Left ventricle myocardium superior (tissue), 1 donor: ENCODE measurements at regions of chr20 and their contacts with region 1.

Region 1: DNA sequence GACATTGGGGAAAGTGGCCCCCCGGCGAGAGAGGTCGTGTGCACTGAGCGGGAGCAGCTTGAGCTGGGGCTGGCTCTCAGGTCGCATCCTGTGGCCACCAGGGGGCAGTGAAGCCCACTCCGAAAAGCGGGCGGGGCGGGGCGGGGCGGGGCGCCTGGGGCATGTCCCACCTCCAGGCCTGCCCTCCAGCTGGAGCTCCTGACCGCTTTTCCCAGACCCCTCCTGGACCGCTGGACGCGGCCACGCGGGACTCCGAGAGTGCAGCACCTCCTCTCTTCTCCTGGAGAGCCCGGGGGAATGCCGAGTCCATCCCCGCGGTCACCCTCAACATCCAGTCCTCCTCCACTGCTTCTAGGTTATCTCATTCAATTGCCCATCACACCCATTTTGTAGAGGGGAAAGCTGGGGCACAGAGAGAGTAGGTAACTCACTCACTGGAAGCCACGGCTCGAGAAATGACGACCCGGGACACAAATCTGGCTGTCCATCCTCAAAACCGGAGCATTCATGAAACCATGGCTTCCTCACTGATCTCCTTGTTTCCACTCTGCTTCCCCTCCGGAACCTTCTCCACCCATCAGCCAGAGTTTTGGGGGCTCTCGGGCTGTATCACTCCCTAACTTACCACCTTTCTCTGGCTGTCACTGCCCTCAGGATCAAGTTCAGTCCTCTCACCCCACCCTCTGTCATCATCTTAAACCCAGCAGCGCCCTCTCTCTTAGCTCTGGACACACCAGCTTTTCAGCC is 24.1 kb downstream of the COX4I2 start:
- DNase-seq: peak; percentile 92
- ATAC-seq: peak; percentile 79

Region 2: GRCh38 chr20:31414380-31414779 is 247.4 kb before region 1 on chr20:
- intact Hi-C with region 1: no loop called
- DNase-seq: no peak
- ATAC-seq: no peak

Region 3: DNA sequence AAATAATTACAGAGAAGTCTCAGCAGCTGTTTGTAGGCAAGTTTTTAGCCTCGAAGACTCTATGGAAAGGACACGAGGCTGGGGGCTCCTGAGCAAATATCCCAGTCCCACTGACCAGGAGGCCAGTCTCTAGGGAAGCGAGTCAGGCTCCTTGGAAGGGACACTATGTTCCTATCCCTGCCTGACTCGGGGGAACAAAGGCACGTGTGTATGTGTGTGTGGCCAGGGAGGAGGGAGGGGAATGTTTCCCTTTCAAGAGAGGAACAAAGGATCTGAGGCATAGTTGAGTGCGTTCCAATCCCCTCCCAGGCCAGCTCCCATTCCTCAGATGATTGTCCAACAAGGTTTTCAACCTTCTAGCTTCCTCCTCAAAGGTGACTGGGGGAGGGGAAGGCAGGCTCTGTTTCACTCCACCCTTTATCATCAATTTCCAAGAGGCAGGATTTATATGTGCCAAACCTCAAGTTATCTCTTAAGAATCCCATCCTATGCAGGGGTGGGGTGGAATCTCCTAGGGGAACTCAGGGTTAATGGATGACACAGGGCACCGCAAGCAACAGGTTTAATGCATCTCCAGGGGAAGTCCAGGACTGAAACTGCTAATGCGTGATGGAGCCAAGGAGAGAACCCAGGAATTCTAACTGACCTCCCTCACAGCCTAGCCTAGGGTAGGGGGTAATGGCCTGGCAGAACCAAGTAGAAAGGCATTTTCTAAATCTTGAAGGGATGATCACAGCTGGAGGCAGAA is 50.9 kb after region 1 on chr20:
- intact Hi-C with region 1: loop called (anchors 5 kb)
- DNase-seq: peak; percentile 83
- ATAC-seq: peak; percentile 89

Region 4: GRCh38 chr20:31723319-31724078 is 61.7 kb after region 1 on chr20:
- intact Hi-C with region 1: loop called (anchors 5 kb)
- DNase-seq: peak; percentile 99
- ATAC-seq: peak; percentile 95

Region 5: GRCh38 chr20:31811796-31812728 is 150.3 kb after region 1 on chr20:
- intact Hi-C with region 1: no loop called
- DNase-seq: no peak
- ATAC-seq: peak; percentile 68